CD4-positive, alpha-beta memory T cell (primary cell): ENCODE measurements at regions of chr14 and their contacts with region 1.

Region 1: DNA sequence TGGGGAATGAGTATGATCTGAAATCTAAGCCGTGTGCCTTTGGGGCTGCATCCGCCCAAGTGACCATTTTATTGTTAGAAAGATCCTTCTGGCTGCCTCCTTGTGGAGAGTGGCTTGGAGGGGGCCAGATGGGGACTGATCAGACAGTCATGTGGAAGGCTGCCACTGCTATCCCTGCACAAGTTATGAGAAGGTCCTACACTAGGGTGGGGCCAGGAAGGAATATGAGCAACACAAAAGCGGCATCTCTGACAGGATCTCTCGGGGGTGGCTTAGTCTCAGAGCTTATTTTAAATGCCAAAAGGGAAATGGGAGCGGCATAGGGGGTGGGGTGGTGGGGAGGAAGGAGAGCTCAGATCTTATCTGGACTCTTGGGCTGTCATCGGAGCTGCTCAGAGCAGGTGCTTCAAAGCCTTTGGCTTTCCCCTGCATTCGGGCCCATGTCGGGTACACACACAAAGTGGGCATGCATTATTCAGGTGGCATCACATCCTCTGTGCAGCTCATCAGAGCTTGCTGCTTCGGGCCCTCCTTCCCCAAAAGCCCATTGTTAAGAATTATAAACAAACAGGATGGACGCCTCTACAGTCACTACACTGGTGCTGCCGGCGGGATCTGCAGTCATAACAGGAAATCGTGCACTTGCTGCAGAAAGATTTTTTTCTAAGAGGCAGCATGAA is 805.4 kb downstream of the VRK1 start:
- DNase-seq: peak; percentile 83 to 94 (median 88)
- H3K4me3 ChIP-seq: peak overlapping the region; percentile 5 to 21
- H3K4me3 Mint-ChIP-seq: no peak overlapping the region
- H3K27ac ChIP-seq: peak overlapping the region; percentile 72
- H3K27ac Mint-ChIP-seq: no peak overlapping the region
- H3K4me1 ChIP-seq: peaks cover 69% of the 10 kb centered on the region
- H3K4me1 Mint-ChIP-seq: peaks cover 4 to 41% (median 19%) of the 10 kb centered on the region in 4 donors
- H3K27me3 ChIP-seq: no peaks in the 10 kb centered on the region
- H3K27me3 Mint-ChIP-seq: no peaks in the 10 kb centered on the region

Region 2: GRCh38 chr14:97185186-97185585 is 417.4 kb before region 1 on chr14:
- CTCF ChIA-PET with region 1: interaction called, 4 read pairs
- POLR2A ChIA-PET with region 1: no interaction called
- intact Hi-C with region 1: loop called (anchors 1 kb)
- DNase-seq: peak in 4 of 5 donors; percentile 22 to 36 (median 30)
- H3K4me3 ChIP-seq: no peak overlapping the region
- H3K4me3 Mint-ChIP-seq: no peak overlapping the region
- H3K27ac ChIP-seq: no peak overlapping the region
- H3K27ac Mint-ChIP-seq: no peak overlapping the region
- H3K4me1 ChIP-seq: no peaks in the 10 kb centered on the region
- H3K4me1 Mint-ChIP-seq: peaks cover 6 to 15% (median 8%) of the 10 kb centered on the region in 4 donors
- H3K27me3 ChIP-seq: no peaks in the 10 kb centered on the region
- H3K27me3 Mint-ChIP-seq: no peaks in the 10 kb centered on the region

Region 3: DNA sequence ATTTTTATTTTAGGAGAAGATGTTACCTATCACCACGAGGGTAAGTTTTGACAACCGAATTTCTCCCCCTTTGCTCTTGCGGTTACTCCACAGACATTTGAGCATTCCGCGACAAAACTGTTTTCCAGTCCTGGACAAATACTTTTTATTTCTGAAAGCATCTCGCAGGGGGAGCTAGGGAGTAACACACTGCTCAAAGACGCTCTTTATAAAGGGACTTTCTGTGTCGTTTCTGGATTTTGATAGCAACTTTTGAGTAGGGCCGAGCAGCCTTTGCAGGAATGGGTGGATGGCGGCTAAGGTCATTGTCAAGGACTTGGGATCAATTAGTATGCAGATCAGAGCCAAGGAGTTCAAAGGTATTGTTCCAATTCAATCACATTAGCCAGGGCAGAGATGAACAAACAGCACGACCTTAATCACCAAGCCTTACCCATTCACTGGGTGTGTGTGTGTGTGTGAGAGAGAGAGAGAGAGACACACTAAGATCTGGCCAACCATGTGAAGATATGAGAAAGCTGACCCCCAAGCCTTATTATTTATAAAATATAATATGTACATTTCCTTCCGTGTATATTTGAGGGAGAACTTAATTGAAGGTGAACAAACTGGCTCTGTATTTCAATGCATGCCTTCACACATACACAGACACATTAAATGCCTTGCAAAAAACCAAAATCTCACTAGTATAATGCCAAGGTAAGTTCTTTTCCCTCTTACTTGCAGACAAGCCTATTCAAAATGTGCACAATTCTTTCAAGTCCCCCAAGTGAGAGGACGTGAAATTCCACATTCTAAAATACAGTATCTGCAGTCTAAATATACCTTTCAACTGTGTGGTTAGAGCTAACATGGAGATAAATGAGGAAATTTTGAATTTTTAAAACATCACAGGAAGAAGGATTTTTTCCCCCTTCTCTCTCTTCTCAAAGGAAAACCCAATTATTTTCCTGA is 191.6 kb before region 1 on chr14:
- CTCF ChIA-PET with region 1: no interaction called
- POLR2A ChIA-PET with region 1: interaction called, 6 read pairs
- intact Hi-C with region 1: loop called (anchors 2 kb)
- DNase-seq: no peak
- H3K4me3 ChIP-seq: no peak overlapping the region
- H3K4me3 Mint-ChIP-seq: no peak overlapping the region
- H3K27ac ChIP-seq: no peak overlapping the region
- H3K27ac Mint-ChIP-seq: no peak overlapping the region
- H3K4me1 ChIP-seq: peaks cover 40% of the 10 kb centered on the region
- H3K4me1 Mint-ChIP-seq: peaks cover 24 to 30% (median 26%) of the 10 kb centered on the region in 4 donors
- H3K27me3 ChIP-seq: no peaks in the 10 kb centered on the region
- H3K27me3 Mint-ChIP-seq: peaks cover 0 to 1% of the 10 kb centered on the region in 2 donors

Region 4: GRCh38 chr14:97554597-97554996 is 48.0 kb before region 1 on chr14:
- CTCF ChIA-PET with region 1: no interaction called
- POLR2A ChIA-PET with region 1: no interaction called
- intact Hi-C with region 1: no loop called
- DNase-seq: no peak
- H3K4me3 ChIP-seq: no peak overlapping the region
- H3K4me3 Mint-ChIP-seq: no peak overlapping the region
- H3K27ac ChIP-seq: no peak overlapping the region
- H3K27ac Mint-ChIP-seq: no peak overlapping the region
- H3K4me1 ChIP-seq: no peaks in the 10 kb centered on the region
- H3K4me1 Mint-ChIP-seq: peaks cover 0 to 2% (median under 1%) of the 10 kb centered on the region in 4 donors
- H3K27me3 ChIP-seq: no peaks in the 10 kb centered on the region
- H3K27me3 Mint-ChIP-seq: no peaks in the 10 kb centered on the region

Region 5: DNA sequence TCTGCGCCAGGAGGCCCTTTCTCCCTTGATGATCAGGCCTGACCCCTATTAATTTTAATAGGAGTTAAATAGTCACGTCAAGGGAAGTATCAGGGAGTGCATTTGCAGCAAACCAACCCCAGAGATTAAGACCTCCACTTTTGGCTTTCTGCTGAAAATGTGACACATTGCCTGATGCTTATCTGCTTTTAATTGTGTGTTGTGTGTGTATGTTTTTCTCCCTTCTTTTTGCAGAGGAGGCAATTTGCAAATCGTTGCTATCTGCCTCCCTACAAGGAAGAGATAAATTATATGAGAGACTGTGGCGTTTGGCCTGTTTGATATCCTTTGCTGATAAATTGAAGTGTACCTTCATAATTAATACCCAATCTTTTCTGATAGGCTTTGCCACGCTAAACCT is 17.5 kb after region 1 on chr14:
- CTCF ChIA-PET with region 1: interaction called, 15 read pairs
- POLR2A ChIA-PET with region 1: interaction called, 82 read pairs
- intact Hi-C with region 1: loop called (anchors 1 kb)
- DNase-seq: peak in 1 of 5 donors; percentile 33
- H3K4me3 ChIP-seq: peak overlapping the region in 1 of 2 donors; percentile 26
- H3K4me3 Mint-ChIP-seq: peak overlapping the region; percentile 60 to 94 (median 85)
- H3K27ac ChIP-seq: peak overlapping the region; percentile 73
- H3K27ac Mint-ChIP-seq: peak overlapping the region; percentile 89 to 99 (median 97)
- H3K4me1 ChIP-seq: peaks cover 45% of the 10 kb centered on the region
- H3K4me1 Mint-ChIP-seq: peaks cover 44 to 67% (median 47%) of the 10 kb centered on the region in 4 donors
- H3K27me3 ChIP-seq: no peaks in the 10 kb centered on the region
- H3K27me3 Mint-ChIP-seq: no peaks in the 10 kb centered on the region

Region 6: DNA sequence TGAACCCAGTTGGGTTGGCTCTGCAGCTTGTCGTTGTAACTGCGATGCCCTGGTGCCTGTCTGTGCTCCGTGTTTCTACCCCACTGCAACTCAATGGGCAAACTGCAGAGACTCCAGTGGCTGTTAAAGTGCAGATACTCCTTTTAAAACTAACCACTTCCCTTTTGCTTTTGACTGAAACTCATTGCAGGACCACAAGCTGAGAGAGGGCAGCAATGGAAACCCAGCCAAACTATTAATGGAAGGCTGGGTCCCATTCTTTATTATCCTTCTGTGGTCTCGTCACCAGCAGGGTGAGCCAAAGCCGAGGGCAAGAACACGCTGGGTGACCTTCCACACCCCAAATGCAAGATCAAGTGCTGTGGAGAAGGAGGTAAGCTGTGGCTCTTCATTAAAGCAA is 105.0 kb after region 1 on chr14:
- CTCF ChIA-PET with region 1: interaction called, 7 read pairs
- POLR2A ChIA-PET with region 1: interaction called, 25 read pairs
- intact Hi-C with region 1: loop called (anchors 5 kb)
- DNase-seq: peak; percentile 24 to 36 (median 28)
- H3K4me3 ChIP-seq: no peak overlapping the region
- H3K4me3 Mint-ChIP-seq: peak overlapping the region in 7 of 8 donors; percentile 25 to 88 (median 68)
- H3K27ac ChIP-seq: no peak overlapping the region
- H3K27ac Mint-ChIP-seq: peak overlapping the region; percentile 5 to 85 (median 74)
- H3K4me1 ChIP-seq: peaks cover 84% of the 10 kb centered on the region
- H3K4me1 Mint-ChIP-seq: peaks cover 79 to 100% (median 90%) of the 10 kb centered on the region in 4 donors
- H3K27me3 ChIP-seq: no peaks in the 10 kb centered on the region
- H3K27me3 Mint-ChIP-seq: no peaks in the 10 kb centered on the region